Right ventricle myocardium inferior (tissue), 1 donor: ENCODE measurements at regions of chr5 and their contacts with region 1.

Region 1: GRCh38 chr5:35926389-35927051 is 11.9 kb downstream of the CAPSL start:
- DNase-seq: no peak
- ATAC-seq: no peak

Region 2: DNA sequence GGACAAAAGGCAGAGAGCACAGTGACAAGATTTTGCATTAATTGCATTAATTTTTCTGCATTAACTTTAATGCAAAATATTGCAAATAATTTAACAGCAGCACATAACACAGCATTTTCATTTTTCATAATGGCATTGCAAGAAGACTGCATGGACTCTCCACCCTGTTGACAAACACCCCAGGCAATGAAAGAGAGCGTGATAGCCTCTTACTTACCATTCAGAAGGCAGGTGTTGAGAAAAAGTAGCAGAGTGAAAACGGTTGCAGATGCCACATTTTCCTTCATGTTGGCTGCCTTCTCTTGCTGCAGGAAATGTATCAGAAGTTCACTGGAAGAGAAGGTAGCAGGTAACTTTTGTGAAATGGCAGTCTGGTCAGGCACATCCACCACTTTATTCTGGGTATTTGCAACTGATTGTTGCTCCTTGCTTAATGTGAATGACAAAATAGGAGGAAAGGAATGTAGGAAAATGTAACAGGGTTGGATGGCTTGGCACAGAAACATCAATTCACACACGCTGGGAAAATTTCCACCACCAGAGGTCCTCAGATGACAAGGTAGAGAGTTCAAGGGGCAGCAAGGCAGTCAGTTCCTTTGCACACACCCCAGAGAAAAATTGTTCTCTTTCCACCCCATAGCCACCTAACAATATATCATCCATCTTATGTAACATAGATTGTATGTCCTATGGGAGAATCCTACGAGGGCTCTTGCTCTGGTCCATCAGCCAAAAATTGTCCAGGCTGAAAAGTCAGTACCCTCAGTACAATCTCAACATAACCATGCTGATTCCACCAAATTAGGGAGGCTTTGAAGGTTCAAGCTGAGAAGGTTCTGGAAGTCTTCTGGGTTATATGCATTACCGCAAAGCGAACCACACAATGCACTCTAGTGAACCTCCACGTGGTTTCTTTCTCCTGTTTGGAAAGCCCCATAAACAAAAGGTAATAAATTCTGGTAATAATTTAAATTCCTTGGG is 836.9 kb before region 1 on chr5:
- intact Hi-C with region 1: loop called (anchors 5 kb)
- DNase-seq: no peak
- ATAC-seq: no peak

Region 3: GRCh38 chr5:35617435-35618303 is 308.9 kb before region 1 on chr5 and contains the start of gene SPEF2:
- intact Hi-C with region 1: loop called (anchors 5 kb)
- DNase-seq: peak; percentile 87
- ATAC-seq: peak; percentile 99
- total RNA-seq, gene SPEF2: 1.1 TPM

Region 4: DNA sequence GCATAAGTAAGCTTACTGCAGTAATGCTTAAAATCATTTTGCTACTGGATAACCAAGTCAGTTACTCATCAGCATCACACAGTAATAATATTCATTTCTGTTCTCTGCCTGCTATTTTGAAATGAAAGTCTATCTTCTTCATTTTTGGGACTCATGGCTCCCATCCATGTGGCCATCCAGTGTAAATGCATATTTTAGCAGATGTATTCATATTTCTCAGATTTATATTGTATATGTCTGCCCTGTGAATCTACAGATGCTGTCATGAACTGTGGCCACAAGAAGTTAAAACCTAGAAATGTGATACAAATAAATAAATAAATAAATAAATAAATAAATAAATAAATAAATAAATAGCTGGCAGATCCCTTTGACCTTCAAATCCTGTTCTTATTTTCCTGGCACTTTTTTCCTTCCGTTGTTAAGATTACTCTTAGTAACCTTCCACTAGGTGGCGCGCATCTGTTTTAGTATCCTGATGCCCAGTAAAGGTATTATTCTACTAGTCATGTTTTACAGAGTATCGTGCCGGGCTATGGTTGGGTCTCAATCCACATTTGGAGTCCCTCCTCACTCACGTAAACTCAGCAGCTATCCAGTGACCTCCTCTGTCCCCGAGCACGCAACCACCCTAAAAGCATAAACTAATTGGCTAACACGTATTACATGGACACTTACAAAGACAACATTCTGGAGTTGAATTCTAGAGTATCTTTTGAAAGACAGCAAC is 149.0 kb before region 1 on chr5:
- intact Hi-C with region 1: loop called (anchors 5 kb)
- DNase-seq: no peak
- ATAC-seq: no peak

Region 5: GRCh38 chr5:36054647-36055046 is 128.1 kb after region 1 on chr5:
- intact Hi-C with region 1: no loop called
- DNase-seq: no peak
- ATAC-seq: no peak

Region 6: GRCh38 chr5:37015795-37016666 is 1089.5 kb after region 1 on chr5:
- intact Hi-C with region 1: no loop called
- DNase-seq: no peak
- ATAC-seq: no peak